Heart left ventricle (tissue), 16 donors: ENCODE measurements at regions of chr2 and their contacts with region 1.

Region 1: GRCh38 chr2:202278944-202279343 is 13.4 kb downstream of the NOP58 start:
- DNase-seq: no peak
- ATAC-seq: peak; percentile 49 to 78 (median 68)
- H3K4me3 ChIP-seq: no peak overlapping the region
- H3K27ac ChIP-seq: peak overlapping the region in 2 of 12 donors; percentile 0 to 46
- H3K4me1 ChIP-seq: peaks cover 0 to 31% (median 9%) of the 10 kb centered on the region in 12 donors
- H3K27me3 ChIP-seq: no peaks in the 10 kb centered on the region
- CTCF ChIP-seq: peak; percentile 41 to 80 (median 63)
- POLR2A ChIP-seq: no peak

Region 2: DNA sequence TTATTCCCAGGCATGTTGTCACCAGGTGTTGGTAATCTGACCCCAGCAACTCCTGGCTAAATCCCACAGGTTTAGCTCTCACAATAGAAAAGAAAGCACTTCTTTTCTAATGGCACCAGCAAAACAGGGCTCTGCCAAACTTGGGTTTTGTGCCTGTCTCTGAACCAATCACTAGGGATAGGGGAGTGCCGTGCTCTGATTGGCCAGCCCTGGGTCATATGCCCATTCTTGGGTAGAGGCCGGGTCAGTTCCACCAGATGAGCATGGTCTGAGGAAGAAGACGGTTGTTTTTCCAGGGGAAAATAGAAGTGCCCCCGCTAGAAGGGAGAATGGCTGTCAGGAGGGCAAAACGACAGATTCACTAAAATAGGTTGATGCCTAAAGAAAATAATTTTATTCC is 457.9 kb before region 1 on chr2:
- intact Hi-C with region 1: no loop called
- DNase-seq: no peak
- ATAC-seq: no peak
- H3K4me3 ChIP-seq: no peak overlapping the region
- H3K27ac ChIP-seq: no peak overlapping the region
- H3K4me1 ChIP-seq: no peaks in the 10 kb centered on the region
- H3K27me3 ChIP-seq: no peaks in the 10 kb centered on the region
- CTCF ChIP-seq: no peak
- POLR2A ChIP-seq: no peak

Region 3: GRCh38 chr2:202494300-202495229 is 215.6 kb after region 1 on chr2:
- intact Hi-C with region 1: loop called in 1 of 10 experiments (anchors 10 kb)
- DNase-seq: no peak
- ATAC-seq: peak in 3 of 4 donors; percentile 61 to 72 (median 69)
- H3K4me3 ChIP-seq: no peak overlapping the region
- H3K27ac ChIP-seq: no peak overlapping the region
- H3K4me1 ChIP-seq: peaks cover 0 to 51% (median 20%) of the 10 kb centered on the region in 12 donors
- H3K27me3 ChIP-seq: no peaks in the 10 kb centered on the region
- CTCF ChIP-seq: no peak
- POLR2A ChIP-seq: no peak

Region 4: DNA sequence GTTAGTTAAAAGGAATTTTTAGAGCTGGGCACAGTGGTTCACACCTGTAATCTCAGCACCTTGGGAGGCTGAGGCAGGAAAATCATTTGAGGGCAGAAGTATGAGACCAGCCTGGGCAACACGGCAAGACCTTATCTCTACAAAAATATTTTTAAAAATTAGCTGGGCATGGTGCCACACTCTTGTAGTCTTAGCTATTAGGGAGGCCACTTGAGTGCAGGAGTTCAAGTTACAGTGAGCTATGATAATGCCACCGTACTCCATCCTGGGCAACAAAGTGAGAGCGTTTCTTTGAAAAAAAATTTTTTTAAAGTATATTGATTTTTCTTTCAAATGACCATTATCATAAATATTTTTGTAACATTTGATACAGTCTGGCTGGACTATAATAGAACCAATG is 262.2 kb after region 1 on chr2:
- intact Hi-C with region 1: loop called in 2 of 10 experiments (anchors 10 kb)
- DNase-seq: no peak
- ATAC-seq: peak; percentile 80 to 91 (median 86)
- H3K4me3 ChIP-seq: no peak overlapping the region
- H3K27ac ChIP-seq: no peak overlapping the region
- H3K4me1 ChIP-seq: peaks cover 0 to 33% (median 18%) of the 10 kb centered on the region in 12 donors
- H3K27me3 ChIP-seq: no peaks in the 10 kb centered on the region
- CTCF ChIP-seq: no peak
- POLR2A ChIP-seq: no peak